ENCODE measurements at regions of chr2 and their contacts with region 1.

Region 1: DNA sequence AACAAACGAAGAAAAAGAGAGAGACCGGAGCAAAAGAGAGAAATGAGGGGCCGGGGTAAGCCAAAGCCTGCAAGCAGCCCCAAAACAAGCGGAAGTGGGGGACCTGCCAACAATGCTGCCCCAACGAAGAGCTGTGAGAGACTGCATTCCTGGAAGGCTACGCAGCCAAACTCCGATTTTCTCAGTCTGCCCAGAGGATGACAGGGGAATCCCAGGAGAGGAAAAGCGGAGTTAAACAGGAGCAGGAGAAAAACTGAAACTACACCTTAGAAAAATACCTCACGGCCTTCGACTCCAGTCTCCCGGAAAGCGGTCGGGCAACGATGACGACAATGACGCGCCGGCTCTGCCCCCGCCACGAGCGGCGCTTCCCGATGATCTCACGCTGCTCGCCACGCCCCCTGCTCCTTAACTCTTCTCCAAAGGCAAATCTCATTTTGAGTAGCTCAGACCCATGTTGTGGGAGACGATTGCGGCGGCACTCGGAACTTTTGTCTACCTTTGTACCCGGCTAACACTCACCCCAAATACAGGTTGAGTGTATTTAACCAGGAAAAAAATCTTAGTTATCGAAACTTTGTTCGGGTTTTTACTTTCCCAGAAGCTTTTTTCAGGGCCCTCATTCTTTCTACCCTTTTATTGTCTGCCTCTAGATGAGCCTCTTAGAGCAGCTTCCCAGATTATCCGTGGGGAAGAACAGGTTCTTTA is at the start of gene C1D:
- DNase-seq: peak; percentile 88 to 93 (median 91)
- H3K4me3 ChIP-seq: peak within 1 kb of the TSS; percentile 90 to 95 (median 92)
- H3K4me3 Mint-ChIP-seq: peak within 1 kb of the TSS; percentile 87 to 95
- H3K27ac ChIP-seq: peak within 1 kb of the TSS; percentile 88 to 97
- H3K27ac Mint-ChIP-seq: peak within 1 kb of the TSS; percentile 97 to 99 (median 99)
- H3K4me1 ChIP-seq: peaks cover 6 to 32% of the 10 kb centered on the region in 2 donors
- H3K4me1 Mint-ChIP-seq: peaks cover 28% of the 10 kb centered on the region
- H3K27me3 ChIP-seq: no peaks in the 10 kb centered on the region
- H3K27me3 Mint-ChIP-seq: peaks cover 0 to 3% (median 1%) of the 10 kb centered on the region in 3 donors
- CTCF ChIP-seq: no peak
- polyA plus RNA-seq, gene C1D: 14.9 to 58.4 (median 49.7) TPM

Region 2: GRCh38 chr2:68157402-68158133 is 94.7 kb after region 1 on chr2 and contains the start of gene PNO1:
- intact Hi-C with region 1: loop called in 1 of 2 experiments (anchors 5 kb)
- DNase-seq: peak; percentile 89 to 97 (median 95)
- H3K4me3 ChIP-seq: peak within 1 kb of the TSS; percentile 73 to 91 (median 85)
- H3K4me3 Mint-ChIP-seq: peak within 1 kb of the TSS; percentile 97 to 99
- H3K27ac ChIP-seq: peak within 1 kb of the TSS; percentile 80 to 99
- H3K27ac Mint-ChIP-seq: peak within 1 kb of the TSS; percentile 99 to 100 (median 100)
- H3K4me1 ChIP-seq: peaks cover 27 to 35% of the 10 kb centered on the region in 2 donors
- H3K4me1 Mint-ChIP-seq: peaks cover 29% of the 10 kb centered on the region
- H3K27me3 ChIP-seq: no peaks in the 10 kb centered on the region
- H3K27me3 Mint-ChIP-seq: peaks cover 0 to 2% (median 0%) of the 10 kb centered on the region in 3 donors
- CTCF ChIP-seq: no peak
- polyA plus RNA-seq, gene PNO1: 4.7 to 14.0 (median 10.8) TPM

Measured in CD14-positive monocyte (primary cell).